CD8-positive, alpha-beta memory T cell (primary cell): ENCODE measurements at regions of chr19 and their contacts with region 1.

Region 1: GRCh38 chr19:35748106-35749020 is at the start of gene LIN37:
- DNase-seq: peak; percentile 97 to 99 (median 98)
- H3K4me3 ChIP-seq: peak within 1 kb of the TSS; percentile 98
- H3K4me3 Mint-ChIP-seq: peak within 1 kb of the TSS; percentile 83 to 99 (median 99)
- H3K27ac ChIP-seq: peak within 1 kb of the TSS; percentile 83
- H3K27ac Mint-ChIP-seq: peak within 1 kb of the TSS; percentile 75 to 97 (median 95)
- H3K4me1 ChIP-seq: peaks cover 39% of the 10 kb centered on the region
- H3K4me1 Mint-ChIP-seq: peaks cover 43 to 56% (median 50%) of the 10 kb centered on the region in 3 donors
- H3K27me3 ChIP-seq: no peaks in the 10 kb centered on the region
- H3K27me3 Mint-ChIP-seq: peaks cover 0 to 2% of the 10 kb centered on the region in 2 donors
- total RNA-seq, gene LIN37: 8.8 to 10.5 TPM

Region 2: GRCh38 chr19:35702223-35703012 is 45.9 kb before region 1 on chr19:
- CTCF ChIA-PET with region 1: interaction called, 3 read pairs
- POLR2A ChIA-PET with region 1: interaction called, 12 read pairs
- DNase-seq: peak; percentile 87 to 95 (median 89)
- H3K4me3 ChIP-seq: peak overlapping the region; percentile 92
- H3K4me3 Mint-ChIP-seq: peak overlapping the region; percentile 82 to 98 (median 92)
- H3K27ac ChIP-seq: peak overlapping the region; percentile 43
- H3K27ac Mint-ChIP-seq: peak overlapping the region; percentile 9 to 95 (median 90)
- H3K4me1 ChIP-seq: peaks cover 6% of the 10 kb centered on the region
- H3K4me1 Mint-ChIP-seq: peaks cover 5 to 8% (median 6%) of the 10 kb centered on the region in 3 donors
- H3K27me3 ChIP-seq: no peaks in the 10 kb centered on the region
- H3K27me3 Mint-ChIP-seq: peaks cover 0 to 2% of the 10 kb centered on the region in 2 donors

Region 3: GRCh38 chr19:35716801-35717666 is 31.3 kb before region 1 on chr19:
- CTCF ChIA-PET with region 1: interaction called, 3 read pairs
- POLR2A ChIA-PET with region 1: interaction called, 11 read pairs
- DNase-seq: peak; percentile 95 to 98 (median 98)
- H3K4me3 ChIP-seq: peak overlapping the region; percentile 89
- H3K4me3 Mint-ChIP-seq: peak overlapping the region; percentile 86 to 98 (median 91)
- H3K27ac ChIP-seq: peak overlapping the region; percentile 72
- H3K27ac Mint-ChIP-seq: peak overlapping the region; percentile 83 to 98 (median 94)
- H3K4me1 ChIP-seq: peaks cover 61% of the 10 kb centered on the region
- H3K4me1 Mint-ChIP-seq: peaks cover 50 to 72% (median 58%) of the 10 kb centered on the region in 3 donors
- H3K27me3 ChIP-seq: no peaks in the 10 kb centered on the region
- H3K27me3 Mint-ChIP-seq: peaks cover 0 to 4% of the 10 kb centered on the region in 2 donors

Region 4: GRCh38 chr19:35828692-35829301 is 80.4 kb after region 1 on chr19:
- CTCF ChIA-PET with region 1: no interaction called
- POLR2A ChIA-PET with region 1: no interaction called
- DNase-seq: peak in 4 of 5 donors; percentile 23 to 62 (median 28)
- H3K4me3 ChIP-seq: no peak overlapping the region
- H3K4me3 Mint-ChIP-seq: no peak overlapping the region
- H3K27ac ChIP-seq: no peak overlapping the region
- H3K27ac Mint-ChIP-seq: peak overlapping the region in 1 of 8 donors; percentile 6
- H3K4me1 ChIP-seq: no peaks in the 10 kb centered on the region
- H3K4me1 Mint-ChIP-seq: no peaks in the 10 kb centered on the region
- H3K27me3 ChIP-seq: no peaks in the 10 kb centered on the region
- H3K27me3 Mint-ChIP-seq: peaks cover 19 to 51% of the 10 kb centered on the region in 2 donors